Activated CD4-positive, alpha-beta T cell treated with anti-CD3 and anti-CD28 coated beads for 36 hours (primary cell): ENCODE measurements at regions of chr4 and their contacts with region 1.

Region 1: GRCh38 chr4:152696764-152697261 is 17.0 kb upstream of the TMEM154 start:
- DNase-seq: peak; percentile 74
- ATAC-seq: peak; percentile 99
- H3K4me3 Mint-ChIP-seq: no peak overlapping the region
- H3K27ac Mint-ChIP-seq: no peak overlapping the region
- H3K4me1 Mint-ChIP-seq: peaks cover 17% of the 10 kb centered on the region
- H3K27me3 Mint-ChIP-seq: peaks cover 8% of the 10 kb centered on the region

Region 2: GRCh38 chr4:153115322-153116290 is 418.8 kb after region 1 on chr4:
- CTCF ChIA-PET with region 1: no interaction called
- POLR2A ChIA-PET with region 1: no interaction called
- intact Hi-C with region 1: loop called in 1 of 2 experiments (anchors 5 kb)
- DNase-seq: peak; percentile 87
- ATAC-seq: peak; percentile 59
- H3K4me3 Mint-ChIP-seq: no peak overlapping the region
- H3K27ac Mint-ChIP-seq: no peak overlapping the region
- H3K4me1 Mint-ChIP-seq: peaks cover 2% of the 10 kb centered on the region
- H3K27me3 Mint-ChIP-seq: no peaks in the 10 kb centered on the region